ENCODE measurements at regions of chr2 and their contacts with region 1.

Region 1: DNA sequence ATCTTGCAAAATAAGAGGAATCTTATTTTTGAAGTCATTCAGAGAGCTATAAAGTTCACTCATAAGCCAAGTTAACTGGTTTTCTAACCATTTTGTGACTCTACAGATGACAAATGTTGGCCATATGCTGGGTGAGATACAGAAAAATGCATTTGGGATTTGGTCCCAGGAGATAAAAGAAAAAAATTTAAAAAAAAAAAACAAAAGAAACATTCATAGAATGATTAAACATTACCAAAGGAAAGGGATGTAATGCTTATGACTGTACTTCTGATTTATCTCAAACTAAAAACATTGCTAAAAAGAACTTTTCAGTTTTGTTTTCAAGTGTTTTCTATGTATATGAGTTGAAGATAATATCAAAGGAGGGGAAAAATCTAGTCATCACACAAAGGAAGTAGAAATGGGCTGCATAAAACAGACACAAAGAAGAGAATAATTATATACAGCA is 43.1 kb downstream of the PELI1 start:
- DNase-seq: peak; percentile 44
- CTCF ChIP-seq: no peak

Region 2: DNA sequence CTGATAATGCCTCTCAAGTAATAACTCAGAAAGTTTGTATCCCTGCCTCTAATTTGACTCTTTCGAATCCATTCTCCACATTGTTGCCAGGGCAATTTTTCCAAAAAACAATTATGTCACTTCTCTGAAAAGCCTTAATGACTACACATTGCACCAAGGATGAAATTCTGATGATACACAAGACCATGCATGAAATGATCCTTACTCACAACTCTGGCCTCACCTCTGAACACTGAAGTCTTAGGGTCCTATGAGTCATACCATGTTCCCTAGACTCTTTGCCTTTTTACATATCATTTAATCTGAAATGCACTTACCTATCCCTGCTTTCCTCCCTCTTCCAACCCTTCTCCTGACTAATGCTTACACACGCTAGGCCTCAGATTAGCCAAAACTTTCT is 563.9 kb before region 1 on chr2:
- CTCF ChIA-PET with region 1: no interaction called
- POLR2A ChIA-PET with region 1: no interaction called
- DNase-seq: no peak
- CTCF ChIP-seq: no peak

Region 3: DNA sequence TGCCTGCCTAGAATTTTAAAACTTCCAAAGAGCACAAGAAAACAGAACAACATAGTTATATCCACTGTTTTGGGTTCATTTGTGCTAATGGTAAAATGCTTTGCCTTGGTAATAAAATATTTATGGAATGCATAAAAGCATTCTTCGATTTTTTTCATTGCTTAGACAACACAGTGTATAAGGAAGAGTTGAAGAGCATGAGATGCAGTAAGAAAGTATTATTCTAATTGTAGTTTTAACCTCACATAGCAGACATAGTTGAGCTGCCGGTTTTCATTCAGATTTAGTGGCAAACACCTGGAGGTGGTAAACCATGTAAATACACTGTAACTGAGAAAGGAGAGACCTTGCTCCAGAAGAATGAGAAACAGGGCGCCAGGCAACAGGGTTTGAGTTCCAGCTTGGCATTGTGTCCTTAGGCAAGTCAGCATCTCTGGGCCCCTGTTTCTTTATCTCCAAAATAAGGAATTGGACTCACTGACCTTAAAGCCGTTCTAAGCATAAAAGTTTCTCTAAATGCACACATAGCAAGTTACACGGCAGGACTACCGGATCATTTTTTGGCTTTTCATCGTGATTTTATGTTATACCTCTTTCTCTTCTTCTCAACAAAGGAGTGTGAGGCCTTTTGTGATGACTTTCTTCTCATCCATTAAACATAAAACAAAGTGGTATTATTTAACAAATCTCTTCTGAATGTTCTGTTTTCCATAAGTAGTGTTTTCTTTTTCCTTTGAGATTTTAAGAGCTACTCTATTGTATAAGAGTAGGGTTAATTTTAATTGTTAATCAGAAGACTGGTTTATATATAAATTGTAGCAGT is 251.6 kb before region 1 on chr2:
- CTCF ChIA-PET with region 1: no interaction called
- POLR2A ChIA-PET with region 1: no interaction called
- DNase-seq: no peak
- CTCF ChIP-seq: no peak

Region 4: GRCh38 chr2:64112016-64112415 is 10.8 kb after region 1 on chr2:
- CTCF ChIA-PET with region 1: interaction called, 18 read pairs
- POLR2A ChIA-PET with region 1: no interaction called
- DNase-seq: no peak
- CTCF ChIP-seq: no peak

Region 5: DNA sequence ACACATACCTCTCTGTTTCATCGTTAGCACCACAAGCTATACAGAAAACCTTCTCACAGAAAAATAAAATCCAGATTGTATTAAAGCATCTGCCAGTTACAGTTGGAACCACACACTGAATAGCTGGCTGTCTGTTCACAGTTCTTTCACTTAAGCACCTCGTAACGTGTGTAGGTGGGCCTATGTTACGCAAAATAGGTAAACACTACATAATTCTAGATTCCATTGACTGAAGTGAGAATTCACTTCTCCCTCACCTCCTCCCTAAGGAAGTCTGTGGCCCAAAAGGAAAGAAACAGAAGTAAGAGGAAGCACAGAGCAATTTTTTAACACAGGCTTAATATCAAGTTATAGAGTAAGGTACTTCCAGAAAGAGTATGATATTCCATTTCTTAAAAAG is 18.2 kb after region 1 on chr2:
- CTCF ChIA-PET with region 1: interaction called, 40 read pairs
- POLR2A ChIA-PET with region 1: no interaction called
- DNase-seq: no peak
- CTCF ChIP-seq: no peak